H1 (cell line): ENCODE measurements at regions of chr10 and their contacts with region 1.

Region 1: DNA sequence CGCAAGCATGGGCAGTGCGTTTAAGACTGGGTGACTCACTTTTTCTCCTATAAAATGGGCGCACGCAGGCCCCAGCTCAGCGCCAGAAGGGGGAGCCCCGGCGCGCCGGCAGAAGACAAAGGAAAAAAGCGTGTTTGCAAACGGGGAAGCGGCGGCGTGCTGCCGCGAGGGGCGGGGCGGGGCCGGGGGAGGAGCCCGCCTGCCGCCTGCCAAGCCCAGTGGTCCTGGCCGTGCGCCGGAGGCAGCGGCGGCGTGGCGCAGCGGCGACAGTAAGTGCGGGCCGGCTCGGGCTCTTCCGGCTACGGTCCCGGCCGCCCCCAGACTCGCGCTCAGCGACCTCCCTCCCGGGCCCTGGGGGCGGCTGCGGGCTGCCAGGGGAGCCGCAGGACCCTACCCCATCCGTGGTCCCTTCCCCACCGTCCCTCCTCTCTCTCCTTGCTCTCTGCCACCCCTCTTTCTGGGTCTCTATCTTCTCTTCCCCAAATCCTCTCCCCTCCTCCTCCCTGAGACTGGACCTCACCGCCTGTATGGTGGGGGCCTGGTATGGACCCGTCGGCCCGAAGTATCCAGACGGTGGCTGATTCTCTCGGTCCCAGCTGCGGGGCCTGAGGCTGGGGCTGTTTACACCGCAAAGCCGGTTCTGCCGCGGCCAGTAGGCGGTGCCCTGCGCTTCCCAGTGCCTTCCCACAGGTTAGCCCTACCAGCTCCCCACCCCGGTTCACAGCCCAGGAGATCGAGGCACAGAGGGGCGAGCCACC is at the start of gene SLC29A3:
- DNase-seq: peak; percentile 44 to 87
- H3K4me3 ChIP-seq: peak within 1 kb of the TSS; percentile 45 to 87 (median 68)
- H3K27ac ChIP-seq: peak within 1 kb of the TSS; percentile 11; the same call in 1 of the 2 replicates
- H3K4me1 ChIP-seq: peaks cover 2 to 10% (median 3%) of the 10 kb centered on the region in 4 experiments; a peak in 4 of 7 replicates
- H3K27me3 ChIP-seq: no peaks in the 10 kb centered on the region
- CTCF ChIP-seq: peak; percentile 76 to 89 (median 88)
- EP300 ChIP-seq: no peak
- POLR2A ChIP-seq: peak in 1 of 2 experiments; percentile 74; a peak in 2 of 3 replicates
- RAD21 ChIP-seq: peak; percentile 76 to 85
- total RNA-seq, gene SLC29A3: 14.0 and 15.2 TPM in 2 replicates

Region 2: DNA sequence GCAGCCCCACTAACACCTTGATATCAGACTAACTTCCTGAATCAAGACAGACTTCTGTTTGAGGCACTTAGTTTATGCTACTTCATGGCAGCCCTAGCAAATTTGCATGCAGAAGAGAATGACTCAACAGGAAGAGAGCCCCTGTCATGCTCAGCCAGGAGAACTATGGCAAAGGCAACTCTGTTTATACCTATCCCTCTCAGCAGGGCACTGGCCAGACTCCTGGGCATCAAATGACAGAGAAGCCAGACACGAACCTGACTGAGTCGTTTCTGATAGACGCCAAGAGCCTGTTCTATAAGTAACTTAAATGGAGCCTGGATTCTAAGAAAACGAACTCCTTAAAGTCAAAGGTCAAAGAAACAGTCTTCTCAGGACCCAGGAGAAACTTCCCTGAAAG is 157.8 kb before region 1 on chr10:
- CTCF ChIA-PET with region 1: no interaction called
- POLR2A ChIA-PET with region 1: no interaction called
- DNase-seq: no peak
- H3K4me3 ChIP-seq: no peak overlapping the region
- H3K27ac ChIP-seq: no peak overlapping the region
- H3K4me1 ChIP-seq: no peaks in the 10 kb centered on the region
- H3K27me3 ChIP-seq: peaks cover 0 to 1% (median 0%) of the 10 kb centered on the region in 4 experiments; a peak in 1 of 7 replicates
- CTCF ChIP-seq: no peak
- EP300 ChIP-seq: no peak
- POLR2A ChIP-seq: no peak
- RAD21 ChIP-seq: no peak

Region 3: DNA sequence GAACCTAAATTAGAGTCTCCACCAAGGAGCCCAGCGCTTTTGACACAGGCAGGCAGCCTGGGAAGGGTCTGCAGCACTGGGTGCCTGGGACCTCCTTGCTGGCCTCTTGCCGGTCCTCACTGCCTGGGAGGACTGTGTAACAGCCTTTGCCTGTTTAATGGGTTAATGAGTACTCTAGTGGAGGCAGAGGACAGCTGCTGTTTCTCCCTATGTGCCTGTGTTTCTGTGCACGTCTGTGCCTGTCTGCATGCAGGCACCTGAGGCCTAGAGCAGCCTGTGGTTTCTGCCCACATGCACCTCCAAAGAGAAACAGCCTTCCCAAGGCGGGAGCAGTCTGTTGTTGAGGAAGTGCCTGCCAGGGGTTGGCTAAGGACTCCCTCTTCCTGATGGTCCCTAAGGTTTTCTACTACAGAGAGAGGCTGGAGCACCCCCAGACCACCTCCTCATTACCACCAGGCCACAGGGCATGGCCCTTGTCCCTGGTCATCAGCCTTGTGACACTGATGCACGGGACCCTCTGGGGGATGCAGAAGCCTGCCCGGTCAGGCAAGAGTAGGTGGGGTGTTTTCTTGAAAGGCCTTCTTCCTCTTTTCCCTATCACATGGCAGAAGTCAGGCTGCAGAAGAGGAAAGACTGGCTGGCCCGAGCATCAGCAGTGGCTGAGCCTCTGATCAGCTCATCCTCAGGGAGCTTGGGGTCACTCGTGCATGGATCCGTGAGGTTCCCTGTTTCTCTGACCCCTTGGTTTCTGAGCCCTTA is 14.1 kb after region 1 on chr10:
- CTCF ChIA-PET with region 1: interaction called, 56 read pairs
- POLR2A ChIA-PET with region 1: interaction called, 4 read pairs
- DNase-seq: no peak
- H3K4me3 ChIP-seq: no peak overlapping the region
- H3K27ac ChIP-seq: no peak overlapping the region
- H3K4me1 ChIP-seq: peaks cover 0 to 18% (median 10%) of the 10 kb centered on the region in 4 experiments; a peak in 6 of 7 replicates
- H3K27me3 ChIP-seq: no peaks in the 10 kb centered on the region
- CTCF ChIP-seq: no peak
- EP300 ChIP-seq: no peak
- POLR2A ChIP-seq: no peak
- RAD21 ChIP-seq: no peak

Region 4: GRCh38 chr10:71351628-71352319 is 32.6 kb after region 1 on chr10:
- CTCF ChIA-PET with region 1: interaction called, 52 read pairs
- POLR2A ChIA-PET with region 1: interaction called, 3 read pairs
- DNase-seq: no peak
- H3K4me3 ChIP-seq: no peak overlapping the region
- H3K27ac ChIP-seq: no peak overlapping the region
- H3K4me1 ChIP-seq: peaks cover 0 to 16% (median 7%) of the 10 kb centered on the region in 4 experiments; a peak in 4 of 7 replicates
- H3K27me3 ChIP-seq: no peaks in the 10 kb centered on the region
- CTCF ChIP-seq: no peak
- EP300 ChIP-seq: no peak
- POLR2A ChIP-seq: no peak
- RAD21 ChIP-seq: no peak

Region 5: DNA sequence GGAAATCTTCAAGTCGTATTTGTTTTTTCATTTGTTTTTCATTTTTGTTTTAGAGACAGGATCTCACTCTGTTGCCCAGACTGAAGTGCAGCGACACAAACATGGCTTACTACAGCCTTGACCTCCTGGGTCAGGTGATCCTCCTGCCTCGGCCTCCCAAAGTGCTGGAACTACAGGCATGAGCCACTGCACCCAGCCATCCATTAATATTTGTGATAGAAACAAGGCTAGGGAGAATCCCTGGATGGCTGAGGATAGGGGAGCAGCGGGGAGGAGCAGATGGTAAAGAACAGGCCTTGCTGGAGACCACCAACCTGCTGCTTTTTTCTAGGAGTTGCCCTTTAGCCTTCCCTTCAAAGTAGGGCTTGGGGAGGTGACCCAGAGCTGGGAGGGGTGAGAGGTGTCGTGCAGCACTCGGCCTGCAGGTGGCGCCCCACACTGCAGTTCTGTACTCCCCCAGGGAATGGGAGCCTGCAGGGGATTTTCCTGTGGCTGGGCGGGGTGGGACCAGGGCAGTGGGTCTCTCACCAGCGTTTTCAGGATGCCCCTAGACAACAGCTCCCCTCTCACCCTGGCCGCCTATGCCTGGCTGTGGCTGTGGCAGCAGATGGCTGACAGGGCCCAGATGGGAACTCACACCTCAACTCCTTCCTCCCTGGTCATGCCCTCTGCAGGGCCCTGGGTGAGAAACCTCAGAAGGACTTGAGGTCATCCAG is 64.9 kb after region 1 on chr10:
- CTCF ChIA-PET with region 1: interaction called, 401 read pairs
- POLR2A ChIA-PET with region 1: no interaction called
- DNase-seq: peak; percentile 58 to 99
- H3K4me3 ChIP-seq: no peak overlapping the region
- H3K27ac ChIP-seq: no peak overlapping the region
- H3K4me1 ChIP-seq: no peaks in the 10 kb centered on the region
- H3K27me3 ChIP-seq: no peaks in the 10 kb centered on the region
- CTCF ChIP-seq: peak; percentile 93 to 96 (median 95)
- EP300 ChIP-seq: no peak
- POLR2A ChIP-seq: no peak
- RAD21 ChIP-seq: peak; percentile 91 to 92

Region 6: DNA sequence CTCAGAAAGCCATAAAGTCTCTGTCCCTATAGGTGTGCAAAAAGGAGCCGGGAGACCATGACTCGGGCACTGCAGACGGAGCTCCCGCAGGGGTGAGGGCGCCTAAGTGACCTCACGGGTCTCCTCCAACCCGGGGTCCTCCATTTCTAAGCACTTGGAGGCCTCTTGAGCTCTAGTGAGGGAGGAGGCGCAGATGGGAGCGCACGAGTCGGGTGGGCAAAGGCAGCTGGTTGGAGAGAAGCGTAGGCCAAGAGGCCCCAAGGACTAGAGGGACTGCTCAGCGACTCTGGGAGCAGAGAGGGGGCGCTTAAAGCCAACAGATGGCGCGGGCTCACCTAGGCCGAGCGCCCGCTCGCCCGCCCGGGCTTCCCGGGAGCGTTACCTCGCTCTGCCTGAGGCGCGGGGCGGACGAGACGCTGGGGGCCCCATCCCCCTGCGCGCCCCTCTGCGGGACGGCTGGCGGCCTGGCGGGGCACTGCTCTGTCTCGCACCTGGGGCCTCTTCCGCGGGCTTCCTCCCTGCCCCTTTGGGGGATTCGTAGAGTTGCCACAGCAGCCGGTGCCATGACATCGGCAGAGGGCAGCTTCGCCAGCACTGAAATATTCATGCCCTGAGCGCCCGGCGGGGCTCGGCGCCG is 77.0 kb after region 1 on chr10:
- CTCF ChIA-PET with region 1: interaction called, 31 read pairs
- POLR2A ChIA-PET with region 1: interaction called, 3 read pairs
- DNase-seq: peak; percentile 60 to 79
- H3K4me3 ChIP-seq: peak overlapping the region; percentile 54 to 86 (median 62)
- H3K27ac ChIP-seq: no peak overlapping the region
- H3K4me1 ChIP-seq: peaks cover 0 to 18% (median 10%) of the 10 kb centered on the region in 4 experiments; a peak in 6 of 7 replicates
- H3K27me3 ChIP-seq: peaks cover 15 to 50% (median 40%) of the 10 kb centered on the region in 4 experiments
- CTCF ChIP-seq: peak; percentile 55 to 84 (median 71)
- EP300 ChIP-seq: no peak
- POLR2A ChIP-seq: no peak
- RAD21 ChIP-seq: peak; percentile 84 to 88

Region 7: GRCh38 chr10:71409516-71410104 is 90.4 kb after region 1 on chr10:
- CTCF ChIA-PET with region 1: no interaction called
- POLR2A ChIA-PET with region 1: no interaction called
- DNase-seq: peak in 1 of 2 experiments; percentile 46
- H3K4me3 ChIP-seq: no peak overlapping the region
- H3K27ac ChIP-seq: no peak overlapping the region
- H3K4me1 ChIP-seq: peaks cover 3 to 4% (median 4%) of the 10 kb centered on the region in 4 experiments; a peak in 4 of 7 replicates
- H3K27me3 ChIP-seq: no peaks in the 10 kb centered on the region; a peak in 1 of 7 replicates
- CTCF ChIP-seq: no peak
- EP300 ChIP-seq: no peak
- POLR2A ChIP-seq: no peak
- RAD21 ChIP-seq: no peak

Region 8: GRCh38 chr10:71475243-71475871 is 156.1 kb after region 1 on chr10:
- CTCF ChIA-PET with region 1: interaction called, 18 read pairs
- POLR2A ChIA-PET with region 1: no interaction called
- DNase-seq: no peak
- H3K4me3 ChIP-seq: no peak overlapping the region
- H3K27ac ChIP-seq: no peak overlapping the region
- H3K4me1 ChIP-seq: peaks cover 0 to 14% (median 6%) of the 10 kb centered on the region in 4 experiments; a peak in 6 of 7 replicates
- H3K27me3 ChIP-seq: no peaks in the 10 kb centered on the region
- CTCF ChIP-seq: peak in 1 of 3 experiments; percentile 2; a peak in 1 of 4 replicates
- EP300 ChIP-seq: no peak
- POLR2A ChIP-seq: no peak; a peak in 1 of 3 replicates
- RAD21 ChIP-seq: no peak